Prostate gland (tissue), 2 donors: ENCODE measurements at regions of chr15 and their contacts with region 1.

Region 1: DNA sequence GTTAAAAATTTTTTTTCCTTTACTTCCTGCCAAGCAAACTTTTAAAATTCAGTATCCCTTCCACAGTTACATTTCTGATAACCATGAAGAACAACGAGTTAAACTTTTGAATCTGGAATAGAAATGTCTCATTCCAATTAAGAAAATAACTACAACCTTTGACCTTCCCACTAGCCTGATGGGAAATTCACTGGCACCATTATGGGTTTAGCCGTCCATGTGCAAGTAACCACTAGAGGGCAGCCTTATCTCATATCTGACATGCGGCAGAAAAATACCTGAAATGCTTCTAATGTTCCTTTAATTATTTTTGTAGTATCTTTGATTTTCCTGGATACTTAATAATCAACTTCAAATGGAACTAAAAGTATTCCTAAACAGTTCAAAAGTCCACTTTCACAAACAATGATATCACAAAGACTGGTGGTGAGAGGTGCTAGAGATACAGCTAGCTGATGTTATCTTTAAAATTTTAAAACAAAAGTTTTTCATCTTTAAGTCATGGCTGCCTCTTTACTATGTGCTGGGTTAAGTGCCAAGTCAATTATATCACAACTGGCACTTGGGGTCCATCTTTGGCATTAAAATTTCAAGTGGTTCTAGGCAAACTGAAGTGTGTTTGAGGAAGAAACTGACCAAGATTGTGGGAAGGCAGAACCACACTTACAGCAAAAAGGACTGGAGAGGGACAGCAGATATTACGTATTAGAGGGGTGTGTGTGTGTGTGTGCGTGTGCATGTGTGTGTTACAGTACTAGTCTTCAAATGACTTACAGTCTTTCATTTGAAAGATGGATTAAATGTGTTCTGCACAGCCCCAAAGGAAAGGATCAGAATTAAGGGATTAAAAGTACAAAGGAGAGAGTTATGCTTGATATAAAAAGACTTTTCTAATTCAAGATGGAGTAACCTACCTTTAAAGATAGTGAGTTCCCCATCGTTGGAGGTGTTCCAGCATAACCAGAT is 107.1 kb upstream of the ICE2 start:
- DNase-seq: peak; percentile 64
- H3K4me3 ChIP-seq: no peak overlapping the region
- H3K27ac ChIP-seq: no peak overlapping the region
- H3K4me1 ChIP-seq: no peaks in the 10 kb centered on the region
- H3K27me3 ChIP-seq: no peaks in the 10 kb centered on the region
- CTCF ChIP-seq: peak; percentile 53 to 92 (median 84)
- POLR2A ChIP-seq: no peak

Region 2: GRCh38 chr15:60379525-60380274 is 206.3 kb before region 1 on chr15:
- intact Hi-C with region 1: no loop called
- DNase-seq: peak; percentile 64
- H3K4me3 ChIP-seq: no peak overlapping the region
- H3K27ac ChIP-seq: peak overlapping the region; percentile 38 to 41
- H3K4me1 ChIP-seq: peaks cover 25% of the 10 kb centered on the region
- H3K27me3 ChIP-seq: no peaks in the 10 kb centered on the region
- CTCF ChIP-seq: no peak
- POLR2A ChIP-seq: no peak

Region 3: DNA sequence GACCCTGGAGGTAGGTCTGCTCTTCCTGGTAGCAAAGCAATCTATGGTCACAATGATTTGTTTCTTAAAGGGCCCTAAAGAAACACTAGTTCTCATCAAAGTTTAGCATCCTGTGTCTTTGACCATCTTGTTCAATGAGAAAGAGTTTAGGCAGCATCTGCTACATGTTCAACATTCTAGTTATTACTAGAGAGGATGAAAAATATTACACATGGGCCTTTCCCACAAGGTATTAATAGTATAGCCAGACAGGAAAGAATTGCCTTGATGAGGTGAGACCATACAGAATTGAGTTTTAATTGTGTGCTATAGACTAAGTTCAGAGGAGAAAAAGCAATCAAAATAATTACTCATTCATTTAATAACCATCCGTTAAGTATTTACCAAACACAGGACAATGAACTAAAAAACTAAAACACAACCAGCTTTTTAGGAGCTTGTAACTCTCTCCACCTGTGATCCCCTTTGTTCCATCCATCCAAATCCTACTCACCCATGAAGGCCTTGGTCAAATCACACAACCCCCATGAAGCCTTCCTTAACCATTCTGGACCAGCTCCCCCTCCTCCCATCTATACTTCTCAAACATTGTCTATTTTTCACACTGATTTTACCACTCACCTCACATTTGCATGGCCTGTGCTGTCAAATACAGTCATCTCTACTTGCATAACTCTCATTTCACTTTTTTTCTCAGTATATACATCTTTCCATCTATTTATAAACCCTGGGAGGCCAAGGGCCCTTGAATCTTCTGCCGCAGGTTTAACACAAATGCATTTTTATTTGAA is 520.2 kb after region 1 on chr15:
- intact Hi-C with region 1: no loop called
- DNase-seq: no peak
- H3K4me3 ChIP-seq: no peak overlapping the region
- H3K27ac ChIP-seq: no peak overlapping the region
- H3K4me1 ChIP-seq: no peaks in the 10 kb centered on the region
- H3K27me3 ChIP-seq: no peaks in the 10 kb centered on the region
- CTCF ChIP-seq: no peak
- POLR2A ChIP-seq: no peak

Region 4: DNA sequence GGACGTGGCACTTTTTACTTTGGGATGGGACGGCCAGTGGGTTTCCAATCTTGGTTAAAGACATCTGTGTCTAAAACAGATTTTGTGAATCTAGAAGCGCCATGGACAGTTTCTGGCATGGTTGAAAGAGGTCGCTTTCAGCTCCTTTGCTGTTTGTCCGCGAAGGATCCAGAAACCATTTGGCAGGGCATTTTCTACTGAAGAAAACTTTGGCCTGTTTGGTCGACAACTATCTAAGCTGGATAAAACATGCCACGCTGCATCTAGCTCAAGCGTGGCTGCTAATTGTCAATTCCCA is 643.8 kb after region 1 on chr15:
- intact Hi-C with region 1: loop called (anchors 10 kb)
- DNase-seq: no peak
- H3K4me3 ChIP-seq: peak overlapping the region; percentile 22 to 52
- H3K27ac ChIP-seq: peak overlapping the region; percentile 10 to 58
- H3K4me1 ChIP-seq: no peaks in the 10 kb centered on the region
- H3K27me3 ChIP-seq: no peaks in the 10 kb centered on the region
- CTCF ChIP-seq: no peak
- POLR2A ChIP-seq: no peak

Region 5: GRCh38 chr15:61834076-61834697 is 1248.2 kb after region 1 on chr15:
- intact Hi-C with region 1: loop called (anchors 5 kb)
- DNase-seq: peak; percentile 75
- H3K4me3 ChIP-seq: no peak overlapping the region
- H3K27ac ChIP-seq: no peak overlapping the region
- H3K4me1 ChIP-seq: no peaks in the 10 kb centered on the region
- H3K27me3 ChIP-seq: no peaks in the 10 kb centered on the region
- CTCF ChIP-seq: peak; percentile 87 to 95 (median 94)
- POLR2A ChIP-seq: no peak